GM23248 (cell line): ENCODE measurements at regions of chr14 and their contacts with region 1.

Region 1: GRCh38 chr14:64671591-64671990 is 32.6 kb upstream of the PLEKHG3 start:
- DNase-seq: peak; percentile 85
- H3K4me3 ChIP-seq: no peak overlapping the region
- H3K27ac ChIP-seq: no peak overlapping the region
- H3K4me1 ChIP-seq: 0 out of 2 replicates have a peak, but pooled peaks cover 5% of the 10 kb centered on the region
- H3K27me3 ChIP-seq: no peaks in the 10 kb centered on the region

Region 2: DNA sequence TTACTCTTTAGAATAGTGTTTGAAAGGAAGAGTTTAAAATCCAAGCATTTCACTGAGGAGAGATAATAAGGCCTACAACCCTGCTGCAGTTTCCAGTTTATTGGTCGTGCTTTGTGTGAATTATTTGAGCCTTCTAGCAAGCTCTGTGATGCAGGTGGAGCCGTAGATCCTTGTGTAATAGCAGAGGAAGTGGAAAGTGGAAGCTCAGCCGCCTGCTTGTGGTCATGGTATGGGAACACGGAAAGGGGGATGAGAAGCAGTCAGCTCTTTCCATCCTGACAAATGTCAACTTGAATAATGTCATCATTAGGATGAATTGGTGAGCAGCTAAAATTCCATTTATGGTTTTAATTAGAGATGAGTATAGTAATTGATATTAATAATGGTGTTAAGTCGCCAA is 789.7 kb before region 1 on chr14:
- in situ Hi-C with region 1: no loop called
- DNase-seq: no peak
- H3K4me3 ChIP-seq: no peak overlapping the region
- H3K27ac ChIP-seq: no peak overlapping the region
- H3K4me1 ChIP-seq: no peaks in the 10 kb centered on the region
- H3K27me3 ChIP-seq: no peaks in the 10 kb centered on the region

Region 3: GRCh38 chr14:64387694-64388532 is 283.7 kb before region 1 on chr14 and contains the start of gene MTHFD1:
- in situ Hi-C with region 1: no loop called
- DNase-seq: peak; percentile 98
- H3K4me3 ChIP-seq: peak within 1 kb of the TSS; percentile 86
- H3K27ac ChIP-seq: peak within 1 kb of the TSS; percentile 80
- H3K4me1 ChIP-seq: peaks cover 8% of the 10 kb centered on the region; the same call in 1 of the 2 replicates
- H3K27me3 ChIP-seq: no peaks in the 10 kb centered on the region
- total RNA-seq, gene MTHFD1: 23.4 and 24.1 TPM in 2 replicates

Region 4: DNA sequence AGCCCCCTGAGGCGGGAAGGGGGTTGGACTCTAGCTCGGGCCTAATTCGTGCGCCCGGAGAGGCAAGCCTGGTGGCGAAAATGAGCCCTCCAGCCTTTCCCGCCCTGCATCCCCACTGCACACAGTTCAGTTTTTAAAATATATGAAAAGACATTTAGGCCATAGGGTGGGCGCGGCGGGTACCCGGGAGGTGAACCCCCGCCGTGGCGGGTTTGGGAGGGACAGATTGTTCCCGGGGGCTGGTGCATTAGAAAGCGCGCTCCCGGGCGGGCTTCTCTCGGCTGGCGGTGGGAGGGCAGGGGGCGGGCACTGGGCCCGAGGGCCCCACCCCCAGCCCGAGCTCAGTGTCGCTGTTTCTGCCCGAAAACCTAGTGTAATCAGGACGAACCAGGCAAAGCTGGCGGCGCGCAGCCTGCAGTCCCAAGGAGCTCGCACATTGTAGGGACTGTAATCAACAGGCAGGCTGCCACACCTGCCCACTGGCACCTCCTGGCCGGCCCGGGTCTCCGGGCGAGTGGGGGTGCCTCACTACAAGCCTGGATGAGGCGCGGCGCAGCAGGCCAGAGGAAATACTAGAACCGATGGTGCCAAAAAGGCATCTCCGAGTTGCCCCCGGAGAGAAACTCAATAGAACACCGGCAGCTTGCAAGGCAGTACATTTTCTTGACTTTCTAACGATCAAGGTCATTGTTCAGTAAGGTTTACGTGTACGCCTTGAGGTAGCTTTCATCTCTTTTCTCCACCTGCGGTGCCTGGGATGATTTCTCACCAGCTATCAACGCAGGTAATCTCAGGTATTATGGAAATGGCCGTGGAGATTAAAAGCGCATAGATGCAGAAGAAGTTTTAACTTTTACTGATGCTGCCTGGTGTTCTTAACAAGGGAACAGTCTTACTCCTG is 208.9 kb after region 1 on chr14:
- in situ Hi-C with region 1: loop called (anchors 10 kb)
- DNase-seq: peak; percentile 6
- H3K4me3 ChIP-seq: peak overlapping the region; percentile 33
- H3K27ac ChIP-seq: no peak overlapping the region
- H3K4me1 ChIP-seq: no peaks in the 10 kb centered on the region
- H3K27me3 ChIP-seq: peaks cover 93% of the 10 kb centered on the region